ENCODE measurements at regions of chr20 and their contacts with region 1.

Region 1: GRCh38 chr20:44457016-44457415 is 18.7 kb upstream of the TTPAL start:
- DNase-seq: no peak
- H3K4me3 ChIP-seq: no peak overlapping the region
- CTCF ChIP-seq: no peak
- POLR2A ChIP-seq: no peak

Region 2: DNA sequence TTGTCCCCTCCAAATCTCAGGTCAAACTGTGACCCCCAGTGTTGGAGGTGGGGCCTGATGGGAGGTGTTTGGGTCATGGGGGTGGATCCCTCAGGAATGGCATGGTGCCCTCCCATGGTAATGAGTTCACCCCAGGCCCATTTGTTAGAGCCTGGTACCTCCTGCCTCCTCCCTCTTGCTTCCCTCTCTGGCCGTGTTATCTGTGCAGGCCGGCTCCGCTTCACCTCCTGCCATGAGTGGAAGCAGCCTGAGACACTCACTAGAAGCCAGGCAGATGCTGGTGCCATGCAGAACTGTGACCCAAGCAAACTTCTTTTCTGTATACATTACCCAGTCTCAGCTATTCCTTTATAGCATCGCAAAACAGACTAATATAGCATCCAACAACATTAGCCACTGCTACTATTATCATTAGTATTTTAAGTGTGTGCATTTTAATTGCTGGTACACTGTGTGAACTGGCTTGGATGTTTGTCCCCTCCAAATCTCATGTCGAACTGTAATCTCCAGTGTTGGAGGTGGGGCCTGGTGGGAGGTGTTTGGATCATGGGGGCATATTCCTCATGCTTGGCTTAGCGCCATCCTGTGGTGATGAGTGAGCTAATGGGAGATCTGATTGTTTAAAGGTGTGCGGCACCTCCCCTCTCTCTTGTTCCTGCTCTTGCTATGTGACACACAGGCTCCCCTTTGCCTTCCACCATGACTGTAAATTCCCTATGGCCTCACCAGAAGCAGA is 234.2 kb before region 1 on chr20:
- intact Hi-C with region 1: loop called (anchors 10 kb)
- DNase-seq: no peak
- H3K4me3 ChIP-seq: no peak overlapping the region
- CTCF ChIP-seq: no peak
- POLR2A ChIP-seq: no peak

Region 3: GRCh38 chr20:44407402-44408184 is 49.4 kb before region 1 on chr20:
- intact Hi-C with region 1: loop called (anchors 10 kb)
- DNase-seq: no peak
- H3K4me3 ChIP-seq: no peak overlapping the region
- CTCF ChIP-seq: no peak
- POLR2A ChIP-seq: no peak

Region 4: GRCh38 chr20:45752746-45753145 is 1295.7 kb after region 1 on chr20:
- intact Hi-C with region 1: no loop called
- DNase-seq: no peak
- H3K4me3 ChIP-seq: no peak overlapping the region
- CTCF ChIP-seq: no peak
- POLR2A ChIP-seq: no peak

Measured in lower leg skin (tissue), 4 donors.